Right lobe of liver (tissue), 6 donors: ENCODE measurements at regions of chr10 and their contacts with region 1.

Region 1: GRCh38 chr10:69716711-69717560 is 84.8 kb upstream of the COL13A1 start:
- DNase-seq: peak; percentile 66 to 71 (median 68)
- ATAC-seq: peak; percentile 81 to 94 (median 90)
- H3K4me3 ChIP-seq: no peak overlapping the region
- H3K27ac ChIP-seq: no peak overlapping the region
- H3K4me1 ChIP-seq: no peaks in the 10 kb centered on the region
- H3K27me3 ChIP-seq: no peaks in the 10 kb centered on the region
- CTCF ChIP-seq: peak; percentile 68 to 84 (median 75)
- POLR2A ChIP-seq: no peak

Region 2: GRCh38 chr10:69515699-69516259 is 201.2 kb before region 1 on chr10:
- intact Hi-C with region 1: loop called in 1 of 2 experiments (anchors 10 kb)
- DNase-seq: peak; percentile 77 to 80 (median 77)
- ATAC-seq: peak; percentile 96 to 99 (median 98)
- H3K4me3 ChIP-seq: no peak overlapping the region
- H3K27ac ChIP-seq: no peak overlapping the region
- H3K4me1 ChIP-seq: no peaks in the 10 kb centered on the region
- H3K27me3 ChIP-seq: no peaks in the 10 kb centered on the region
- CTCF ChIP-seq: peak; percentile 84 to 88 (median 86)
- POLR2A ChIP-seq: no peak

Region 3: DNA sequence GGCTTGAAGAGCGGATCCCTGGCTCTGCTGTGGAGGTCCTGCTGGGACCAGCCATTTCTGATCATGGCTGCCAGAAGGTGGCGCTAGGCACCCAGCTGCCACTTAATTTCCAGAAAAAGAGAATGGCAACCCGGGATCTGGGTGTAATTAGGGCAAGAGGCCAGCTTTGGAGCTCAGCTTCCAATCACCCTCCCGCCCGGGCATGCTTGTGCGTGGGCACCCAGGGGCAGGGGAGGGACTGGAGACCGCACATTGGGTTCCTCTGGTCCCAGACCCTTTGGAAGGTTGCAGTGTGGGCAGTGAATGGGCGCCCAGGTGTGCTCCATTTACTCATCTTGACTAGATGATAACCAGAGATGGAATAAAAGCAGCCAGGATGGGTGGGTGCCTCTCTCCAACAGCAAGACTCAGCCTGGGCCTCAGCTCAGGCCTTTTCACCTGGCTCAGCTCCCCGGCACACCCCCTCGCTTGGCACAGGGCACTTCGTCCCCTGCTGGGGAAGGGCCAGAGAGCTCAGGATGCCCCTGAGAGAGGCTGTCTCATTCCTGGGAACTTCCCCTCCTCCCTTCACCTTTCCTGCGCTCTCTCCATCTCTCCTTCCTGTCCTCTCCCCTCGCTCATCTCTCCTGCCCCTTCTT is 72.2 kb before region 1 on chr10:
- intact Hi-C with region 1: loop called (anchors 5 kb)
- DNase-seq: peak; percentile 59 to 70 (median 65)
- ATAC-seq: peak; percentile 75 to 91 (median 84)
- H3K4me3 ChIP-seq: no peak overlapping the region
- H3K27ac ChIP-seq: no peak overlapping the region
- H3K4me1 ChIP-seq: no peaks in the 10 kb centered on the region
- H3K27me3 ChIP-seq: no peaks in the 10 kb centered on the region
- CTCF ChIP-seq: peak; percentile 82 to 91 (median 86)
- POLR2A ChIP-seq: no peak